ENCODE measurements at regions of chr11 and their contacts with region 1.

Region 1: DNA sequence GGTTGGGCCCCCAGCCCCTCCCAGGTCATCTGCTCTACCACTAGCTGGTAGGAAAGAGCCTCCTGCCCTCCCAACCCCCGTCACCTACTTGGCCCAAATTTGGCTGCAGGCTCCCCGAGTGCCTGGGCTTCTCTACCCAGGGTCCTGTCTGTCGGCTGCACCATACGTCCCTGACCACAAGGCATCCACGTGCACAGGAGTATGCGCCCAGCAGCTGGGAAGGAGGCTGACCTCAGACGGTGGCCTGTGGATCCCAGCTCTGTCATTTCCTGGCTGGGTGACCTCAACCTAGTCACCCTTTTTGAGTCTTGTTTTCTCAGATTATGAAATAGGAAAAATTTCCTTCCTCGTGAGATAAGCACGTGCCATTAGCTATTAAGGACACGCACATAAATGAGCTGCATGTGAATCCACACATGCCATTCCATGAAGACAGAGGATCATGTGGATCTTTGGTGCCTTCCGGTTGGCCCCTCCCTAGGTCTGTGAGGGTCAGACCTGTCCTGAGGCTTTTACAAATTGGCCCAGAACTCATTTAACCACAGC is 13.7 kb downstream of the CYB561A3 start:
- DNase-seq: no peak
- H3K4me3 ChIP-seq: no peak overlapping the region
- H3K4me3 Mint-ChIP-seq: no peak overlapping the region
- H3K27ac ChIP-seq: no peak overlapping the region
- H3K27ac Mint-ChIP-seq: peak overlapping the region in 2 of 7 donors; percentile 27 to 36
- H3K4me1 ChIP-seq: no peaks in the 10 kb centered on the region
- H3K4me1 Mint-ChIP-seq: peaks cover 0 to 4% (median 0%) of the 10 kb centered on the region in 4 donors
- H3K27me3 ChIP-seq: no peaks in the 10 kb centered on the region
- H3K27me3 Mint-ChIP-seq: no peaks in the 10 kb centered on the region

Region 2: GRCh38 chr11:61361686-61362541 is 13.9 kb after region 1 on chr11 and contains the starts of genes CYB561A3 and TMEM138:
- CTCF ChIA-PET with region 1: interaction called, 3 read pairs
- POLR2A ChIA-PET with region 1: interaction called, 13 read pairs
- intact Hi-C with region 1: no loop called
- DNase-seq: peak; percentile 83 to 90 (median 85)
- H3K4me3 ChIP-seq: peak within 1 kb of the TSS; percentile 87 to 95
- H3K4me3 Mint-ChIP-seq: peak within 1 kb of the TSS; percentile 93 to 100 (median 98)
- H3K27ac ChIP-seq: peak within 1 kb of the TSS; percentile 95
- H3K27ac Mint-ChIP-seq: peak within 1 kb of the TSS; percentile 92 to 100 (median 99)
- H3K4me1 ChIP-seq: peaks cover 27% of the 10 kb centered on the region
- H3K4me1 Mint-ChIP-seq: peaks cover 21 to 51% (median 33%) of the 10 kb centered on the region in 4 donors
- H3K27me3 ChIP-seq: no peaks in the 10 kb centered on the region
- H3K27me3 Mint-ChIP-seq: no peaks in the 10 kb centered on the region
- total RNA-seq, gene CYB561A3: 40.1 to 42.6 TPM
- total RNA-seq, gene TMEM138: 61.2 to 62.5 TPM

Region 3: GRCh38 chr11:61567286-61568061 is 219.5 kb after region 1 on chr11:
- CTCF ChIA-PET with region 1: no interaction called
- POLR2A ChIA-PET with region 1: no interaction called
- intact Hi-C with region 1: no loop called
- DNase-seq: peak; percentile 61 to 82 (median 70)
- H3K4me3 ChIP-seq: no peak overlapping the region
- H3K4me3 Mint-ChIP-seq: no peak overlapping the region
- H3K27ac ChIP-seq: no peak overlapping the region
- H3K27ac Mint-ChIP-seq: peak overlapping the region in 3 of 7 donors; percentile 59 to 79 (median 72)
- H3K4me1 ChIP-seq: no peaks in the 10 kb centered on the region
- H3K4me1 Mint-ChIP-seq: peaks cover 0 to 10% (median 2%) of the 10 kb centered on the region in 4 donors
- H3K27me3 ChIP-seq: peaks cover 10% of the 10 kb centered on the region
- H3K27me3 Mint-ChIP-seq: peaks cover 34 to 55% of the 10 kb centered on the region in 2 donors

Measured in CD4-positive, alpha-beta memory T cell (primary cell).